ENCODE measurements at regions of chr6 and their contacts with region 1.

Region 1: DNA sequence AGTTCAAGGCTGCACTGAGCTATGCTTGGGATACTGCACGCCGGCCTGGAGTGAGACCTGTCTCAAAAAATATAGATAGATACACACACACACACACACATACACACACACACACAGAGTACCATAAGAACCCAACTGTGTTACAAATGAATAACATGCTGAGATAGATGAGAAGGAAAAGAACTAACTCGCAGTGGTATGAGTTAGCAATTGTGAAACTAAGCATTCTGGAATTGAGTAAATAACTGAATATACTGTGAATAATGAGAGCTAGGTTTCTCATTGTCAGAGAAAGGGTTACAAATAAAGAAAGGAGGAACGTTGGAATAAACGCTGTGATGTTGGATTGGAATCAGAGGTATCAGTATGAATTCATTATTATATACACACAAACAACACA is 14.6 kb upstream of the FAXC start:
- DNase-seq: no peak
- H3K4me3 Mint-ChIP-seq: no peak overlapping the region
- H3K27ac Mint-ChIP-seq: peak overlapping the region; percentile 47
- H3K4me1 Mint-ChIP-seq: peaks cover 14% of the 10 kb centered on the region
- H3K27me3 Mint-ChIP-seq: peaks cover 4% of the 10 kb centered on the region

Region 2: DNA sequence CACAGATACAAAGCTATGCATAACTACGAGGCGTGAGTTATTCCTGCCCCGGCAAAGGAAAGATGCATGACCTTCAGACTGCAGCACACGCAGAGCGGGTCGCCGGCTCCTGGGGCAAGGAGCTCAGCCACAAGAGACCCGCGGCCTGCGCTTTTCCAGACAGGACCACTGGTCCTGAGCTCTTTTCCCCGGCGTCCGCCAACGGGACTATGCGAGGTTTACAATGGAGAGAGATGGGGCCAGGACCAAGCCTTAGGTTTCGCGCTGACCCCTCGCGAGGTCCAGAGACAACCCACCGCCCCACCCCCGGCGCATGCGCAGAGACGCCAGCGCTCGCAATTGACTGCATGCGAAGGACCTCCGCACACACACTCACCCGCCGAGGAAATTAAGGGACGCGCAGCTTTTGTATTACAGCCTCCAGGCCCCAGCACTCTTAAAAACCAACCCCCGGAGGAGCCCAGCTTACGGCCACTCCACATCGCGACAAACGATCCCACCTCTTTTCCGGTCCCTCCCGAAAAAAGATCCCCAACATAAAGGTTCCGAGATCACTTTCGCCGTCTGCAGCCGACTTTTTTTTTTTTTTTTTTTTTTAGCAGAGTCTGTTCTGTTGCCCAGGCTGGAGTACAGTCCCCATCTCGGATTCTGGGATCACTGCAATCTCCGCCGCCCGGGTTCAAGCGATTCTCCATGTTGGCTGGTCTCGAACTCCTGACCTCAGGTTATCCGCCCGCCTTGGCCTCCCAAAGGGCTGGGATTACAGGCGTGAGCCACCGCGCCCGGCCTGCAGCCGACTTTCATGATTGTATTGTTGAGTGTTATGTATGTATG is 29.9 kb after region 1 on chr6 and contains the start of gene COQ3:
- intact Hi-C with region 1: loop called (anchors 2 kb)
- DNase-seq: peak; percentile 56
- H3K4me3 Mint-ChIP-seq: peak within 1 kb of the TSS; percentile 94
- H3K27ac Mint-ChIP-seq: peak within 1 kb of the TSS; percentile 88
- H3K4me1 Mint-ChIP-seq: peaks cover 11% of the 10 kb centered on the region
- H3K27me3 Mint-ChIP-seq: no peaks in the 10 kb centered on the region
- total RNA-seq, gene COQ3: 13.5 and 16.7 TPM in 2 replicates